AG04449 (cell line): ENCODE measurements at regions of chr1 and their contacts with region 1.

Region 1: DNA sequence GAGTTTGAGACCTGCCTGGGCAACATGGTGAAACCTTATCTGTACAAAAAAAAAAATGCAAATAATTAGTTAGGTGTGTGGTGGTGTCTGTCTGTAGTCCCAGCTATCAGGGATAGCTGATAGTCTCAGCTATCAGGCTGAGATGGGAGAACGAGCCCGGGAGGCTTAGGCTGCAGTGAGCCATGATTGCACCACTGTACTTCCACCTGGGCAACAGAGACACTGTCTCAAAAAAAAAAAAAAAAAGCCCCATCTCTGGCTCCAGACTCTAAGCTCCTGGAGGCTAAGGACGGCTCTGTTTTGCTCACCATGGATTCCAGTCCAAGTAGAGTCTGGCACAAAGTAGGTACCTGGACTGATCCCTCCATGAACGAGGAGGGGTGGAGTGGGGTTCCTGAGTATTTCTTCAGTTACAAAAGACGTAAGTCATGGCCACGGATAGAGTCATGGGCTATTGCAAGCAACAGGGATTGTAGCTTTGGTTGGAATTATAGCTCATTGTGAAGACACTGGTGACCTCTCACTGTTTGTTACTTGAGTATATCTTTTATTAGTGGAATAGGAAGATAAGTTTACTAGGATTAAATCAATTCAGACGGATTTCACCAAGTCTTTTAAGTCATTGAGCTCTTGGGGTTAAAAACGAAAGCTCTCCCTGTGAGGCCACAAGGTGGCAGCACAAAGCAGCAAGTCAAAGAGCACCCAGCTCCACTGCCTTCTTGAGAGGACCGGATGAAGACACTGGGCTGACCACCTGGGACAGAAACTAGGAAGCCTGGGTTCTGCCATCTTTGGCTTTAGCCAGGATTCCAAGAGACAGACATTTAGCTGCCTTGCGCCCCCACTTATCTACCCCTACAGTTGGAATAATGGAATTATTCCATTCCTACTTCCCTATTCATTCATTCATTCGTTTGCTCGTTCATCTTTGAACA is 35.6 kb upstream of the TMEM61 start:
- DNase-seq: peak; percentile 41
- H3K4me3 ChIP-seq: no peak overlapping the region
- CTCF ChIP-seq: peak; percentile 77

Region 2: GRCh38 chr1:54666333-54666732 is 278.5 kb before region 1 on chr1:
- CTCF ChIA-PET with region 1: no interaction called
- POLR2A ChIA-PET with region 1: no interaction called
- DNase-seq: no peak
- H3K4me3 ChIP-seq: no peak overlapping the region
- CTCF ChIP-seq: no peak

Region 3: DNA sequence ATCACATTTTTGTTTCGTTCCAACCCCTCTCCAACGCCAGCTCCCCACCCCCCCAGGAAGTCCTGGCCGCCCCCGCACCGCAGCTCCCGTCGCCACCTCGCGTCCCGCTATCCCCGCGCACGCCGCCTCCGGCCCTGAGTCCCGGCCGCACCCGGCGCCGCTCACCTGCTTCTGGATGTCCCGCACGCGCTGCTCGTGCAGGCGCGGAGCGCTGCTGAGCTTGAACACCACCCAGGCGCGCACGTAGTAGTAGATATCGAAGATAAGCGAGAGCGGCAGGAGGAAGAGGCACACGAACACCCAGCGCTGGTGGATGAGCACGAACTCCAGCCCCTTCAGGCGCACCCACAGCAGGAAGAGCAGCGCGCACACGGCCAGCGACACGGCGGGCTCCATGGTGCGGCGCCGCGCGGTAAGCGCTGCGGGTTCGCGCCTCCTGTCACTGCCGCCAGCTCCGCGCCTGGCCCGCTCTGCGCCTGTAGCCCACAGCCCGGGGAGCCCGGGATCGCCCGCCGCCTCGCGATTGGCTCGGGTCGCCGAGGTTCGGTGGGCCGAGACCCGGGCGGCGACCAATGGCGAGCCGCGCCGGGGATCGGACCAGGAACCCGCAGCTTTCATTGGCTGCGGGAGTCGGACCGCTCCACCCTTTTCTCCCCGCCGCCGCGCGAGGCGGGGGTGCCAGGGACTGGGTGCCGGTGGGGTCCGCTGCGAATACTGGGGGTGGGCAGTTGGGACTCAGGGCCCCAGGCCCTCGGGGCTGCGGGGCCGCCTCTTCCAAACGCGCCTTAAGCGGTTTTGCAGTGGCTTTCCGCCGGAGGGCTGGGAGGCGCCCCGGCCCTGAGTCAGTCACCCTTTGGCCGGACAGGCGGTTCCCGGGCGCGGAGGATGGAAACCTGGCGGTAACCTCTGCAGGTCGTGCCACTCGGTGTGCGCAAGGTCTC is 57.9 kb before region 1 on chr1 and contains the start of gene DHCR24:
- CTCF ChIA-PET with region 1: interaction called, 17 read pairs
- POLR2A ChIA-PET with region 1: no interaction called
- DNase-seq: no peak
- H3K4me3 ChIP-seq: peak within 1 kb of the TSS; percentile 90
- CTCF ChIP-seq: no peak

Region 4: GRCh38 chr1:54922921-54923531 is 21.9 kb before region 1 on chr1:
- CTCF ChIA-PET with region 1: interaction called, 10 read pairs
- POLR2A ChIA-PET with region 1: no interaction called
- DNase-seq: no peak
- H3K4me3 ChIP-seq: no peak overlapping the region
- CTCF ChIP-seq: no peak

Region 5: GRCh38 chr1:54934869-54935268 is 10.0 kb before region 1 on chr1:
- CTCF ChIA-PET with region 1: interaction called, 85 read pairs
- POLR2A ChIA-PET with region 1: no interaction called
- DNase-seq: peak; percentile 94
- H3K4me3 ChIP-seq: no peak overlapping the region
- CTCF ChIP-seq: no peak

Region 6: DNA sequence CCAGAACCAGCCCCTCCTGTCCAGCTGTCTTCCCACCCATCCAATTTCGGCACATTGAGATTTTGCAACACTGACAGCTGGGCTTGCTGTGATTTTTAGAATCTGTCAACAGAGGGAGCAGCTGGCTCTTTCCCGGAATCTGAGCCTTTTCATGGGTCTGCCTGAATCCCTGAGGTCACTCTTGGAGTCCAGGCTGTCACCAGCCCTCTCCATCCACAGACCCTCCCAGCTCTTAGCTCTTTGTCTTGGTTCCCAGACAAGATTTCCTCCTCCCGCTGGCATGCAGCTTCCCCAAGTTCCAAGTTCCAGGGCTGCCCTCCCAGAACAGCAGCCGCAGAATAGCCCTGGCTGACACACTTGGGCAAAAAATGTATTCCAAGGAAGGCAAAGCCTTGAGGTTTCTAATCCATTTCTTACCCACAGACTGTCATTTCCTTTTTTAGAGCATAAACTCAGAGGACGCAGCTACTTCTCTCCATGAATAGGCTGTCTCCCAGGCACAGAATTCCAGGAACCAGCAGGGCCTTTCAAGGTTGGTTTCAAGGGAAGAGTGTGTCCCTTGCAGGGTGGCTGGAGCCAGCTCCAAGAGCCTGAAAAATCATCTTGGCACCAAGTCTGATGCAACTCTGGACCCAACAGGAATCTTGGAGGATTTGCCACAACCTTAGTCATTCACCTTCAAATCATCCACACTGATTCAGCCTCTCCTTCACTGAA is 28.5 kb after region 1 on chr1:
- CTCF ChIA-PET with region 1: interaction called, 37 read pairs
- POLR2A ChIA-PET with region 1: no interaction called
- DNase-seq: no peak
- H3K4me3 ChIP-seq: no peak overlapping the region
- CTCF ChIP-seq: peak; percentile 53

Region 7: GRCh38 chr1:54996359-54996868 is 51.5 kb after region 1 on chr1:
- CTCF ChIA-PET with region 1: interaction called, 522 read pairs
- POLR2A ChIA-PET with region 1: no interaction called
- DNase-seq: no peak
- H3K4me3 ChIP-seq: no peak overlapping the region
- CTCF ChIP-seq: peak; percentile 87

Region 8: DNA sequence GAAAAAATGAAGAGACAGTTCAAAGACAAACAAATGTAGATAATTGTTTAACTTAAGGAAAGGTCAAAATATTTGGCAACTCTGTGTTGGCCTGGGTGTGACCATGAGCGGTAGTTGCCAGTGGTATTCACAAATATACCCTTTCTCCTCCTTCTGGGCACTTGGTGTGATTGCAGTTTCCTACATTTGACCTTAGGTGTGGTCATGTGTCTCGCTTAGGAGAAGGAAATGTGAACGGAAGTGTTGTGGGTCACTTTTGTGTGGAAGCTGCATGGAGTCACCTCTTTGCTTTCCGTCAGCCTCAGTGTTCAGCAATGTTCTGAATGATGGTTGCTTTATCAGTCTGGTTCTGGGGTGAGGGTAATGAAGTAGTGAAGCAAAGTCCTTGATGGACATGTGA is 91.0 kb after region 1 on chr1:
- CTCF ChIA-PET with region 1: interaction called, 29 read pairs
- POLR2A ChIA-PET with region 1: no interaction called
- DNase-seq: no peak
- H3K4me3 ChIP-seq: no peak overlapping the region
- CTCF ChIP-seq: no peak